ENCODE measurements at regions of chr2 and their contacts with region 1.

Region 1: GRCh38 chr2:182186132-182186735 is 200.6 kb downstream of the PPP1R1C start:
- DNase-seq: no peak
- H3K4me3 ChIP-seq: no peak overlapping the region
- H3K27ac ChIP-seq: no peak overlapping the region
- H3K4me1 ChIP-seq: no peaks in the 10 kb centered on the region
- H3K27me3 ChIP-seq: no peaks in the 10 kb centered on the region
- CTCF ChIP-seq: peak; percentile 58 to 91 (median 82)
- POLR2A ChIP-seq: no peak

Region 2: GRCh38 chr2:182132605-182133004 is 53.6 kb before region 1 on chr2:
- intact Hi-C with region 1: no loop called
- DNase-seq: no peak
- H3K4me3 ChIP-seq: no peak overlapping the region
- H3K27ac ChIP-seq: no peak overlapping the region
- H3K4me1 ChIP-seq: no peaks in the 10 kb centered on the region
- H3K27me3 ChIP-seq: no peaks in the 10 kb centered on the region
- CTCF ChIP-seq: peak in 1 of 6 experiments; percentile 5
- POLR2A ChIP-seq: no peak

Region 3: GRCh38 chr2:182650704-182651103 is 464.5 kb after region 1 on chr2:
- intact Hi-C with region 1: loop called (anchors 5 kb)
- DNase-seq: no peak
- H3K4me3 ChIP-seq: no peak overlapping the region
- H3K27ac ChIP-seq: no peak overlapping the region
- H3K4me1 ChIP-seq: peaks cover 0 to 6% (median 0%) of the 10 kb centered on the region in 3 donors
- H3K27me3 ChIP-seq: no peaks in the 10 kb centered on the region
- CTCF ChIP-seq: peak; percentile 23 to 64 (median 54)
- POLR2A ChIP-seq: no peak

Region 4: DNA sequence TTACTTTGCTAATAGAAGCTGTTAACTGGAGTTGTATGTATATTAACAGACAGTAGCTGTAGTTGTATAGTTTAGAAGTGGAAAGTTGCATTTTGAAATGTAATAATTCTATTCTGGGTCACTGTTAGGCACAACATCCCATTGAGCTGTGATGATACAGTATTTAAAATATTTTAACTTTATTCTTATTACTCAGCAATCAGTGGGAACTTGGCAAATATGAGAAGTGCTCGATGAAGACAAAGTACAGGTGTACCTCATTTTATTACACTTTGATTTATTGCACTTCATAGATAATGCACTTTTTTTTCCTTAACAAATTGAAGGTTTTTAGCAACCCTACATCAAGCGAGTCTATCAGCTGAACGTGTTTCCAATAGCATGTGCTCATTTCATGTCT is 538.4 kb after region 1 on chr2:
- intact Hi-C with region 1: loop called (anchors 5 kb)
- DNase-seq: no peak
- H3K4me3 ChIP-seq: no peak overlapping the region
- H3K27ac ChIP-seq: no peak overlapping the region
- H3K4me1 ChIP-seq: no peaks in the 10 kb centered on the region
- H3K27me3 ChIP-seq: no peaks in the 10 kb centered on the region
- CTCF ChIP-seq: no peak
- POLR2A ChIP-seq: no peak

Measured in esophagus squamous epithelium (tissue), 5 donors.